ENCODE measurements at regions of chr20 and their contacts with region 1.

Region 1: DNA sequence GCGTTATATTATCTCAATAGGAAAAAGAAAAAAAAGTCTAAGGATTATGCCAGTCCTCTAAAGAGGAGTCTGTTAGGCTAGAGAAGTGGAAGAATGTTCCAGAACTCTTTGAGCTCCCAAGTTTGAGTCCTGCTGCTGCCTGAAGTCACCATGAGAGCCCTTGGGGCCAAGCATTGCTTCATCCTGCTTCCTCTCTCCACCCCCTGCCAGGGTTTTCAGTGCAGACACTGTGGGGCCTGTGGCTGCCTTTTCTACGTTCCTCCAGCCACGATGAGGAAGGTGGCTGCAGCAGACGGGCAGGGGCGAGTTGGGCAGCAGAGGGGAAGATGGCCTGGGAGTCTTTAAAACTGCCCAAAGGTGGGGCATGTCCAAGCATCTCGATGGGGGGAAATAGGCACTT is 214.4 kb upstream of the KCNG1 start:
- DNase-seq: peak; percentile 4
- ATAC-seq: peak; percentile 44
- H3K4me3 ChIP-seq: no peak overlapping the region
- H3K27ac ChIP-seq: no peak overlapping the region
- H3K4me1 ChIP-seq: peaks cover 5% of the 10 kb centered on the region; the same call in 1 of the 2 replicates
- H3K27me3 ChIP-seq: peaks cover 15% of the 10 kb centered on the region
- CTCF ChIP-seq: no peak
- POLR2A ChIP-seq: no peak
- RAD21 ChIP-seq: no peak

Region 2: GRCh38 chr20:51287592-51288378 is 50.5 kb after region 1 on chr20:
- CTCF ChIA-PET with region 1: interaction called, 4 read pairs
- POLR2A ChIA-PET with region 1: no interaction called
- dilution Hi-C with region 1: no loop called
- in situ Hi-C with region 1: no loop called
- intact Hi-C with region 1: loop called (anchors 5 kb)
- DNase-seq: no peak
- ATAC-seq: no peak
- H3K4me3 ChIP-seq: no peak overlapping the region
- H3K27ac ChIP-seq: no peak overlapping the region
- H3K4me1 ChIP-seq: no peaks in the 10 kb centered on the region
- H3K27me3 ChIP-seq: peaks cover 17% of the 10 kb centered on the region
- CTCF ChIP-seq: no peak
- POLR2A ChIP-seq: no peak
- RAD21 ChIP-seq: no peak

Measured in IMR-90 (cell line).